OCI-LY7 (cell line): ENCODE measurements at regions of chr6 and their contacts with region 1.

Region 1: GRCh38 chr6:159645640-159646039 is 47.4 kb downstream of the SOD2 start:
- DNase-seq: no peak
- H3K4me3 ChIP-seq: no peak overlapping the region
- H3K27ac ChIP-seq: no peak overlapping the region
- H3K4me1 ChIP-seq: no peaks in the 10 kb centered on the region
- CTCF ChIP-seq: no peak

Region 2: DNA sequence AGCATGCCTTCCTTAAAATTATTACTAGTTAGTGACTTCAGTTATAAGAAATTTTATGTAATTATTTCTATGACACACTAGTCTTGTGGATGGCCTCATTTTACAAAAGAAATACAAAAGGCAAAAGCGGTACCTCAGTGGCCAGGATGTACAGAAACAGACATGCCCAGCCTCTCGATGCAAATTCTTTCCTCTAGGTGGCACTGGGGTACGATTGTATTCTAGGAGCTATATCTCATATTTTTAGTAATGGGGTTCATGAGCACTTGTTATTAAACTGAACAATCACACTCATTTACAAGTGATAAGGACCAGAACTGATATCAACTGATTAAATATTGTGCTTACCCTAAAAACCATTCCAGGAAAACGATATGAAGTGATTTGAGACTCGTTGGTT is 12.4 kb before region 1 on chr6:
- CTCF ChIA-PET with region 1: no interaction called
- POLR2A ChIA-PET with region 1: interaction called, 12 read pairs
- intact Hi-C with region 1: no loop called
- DNase-seq: peak; percentile 45
- H3K4me3 ChIP-seq: no peak overlapping the region
- H3K27ac ChIP-seq: no peak overlapping the region
- H3K4me1 ChIP-seq: no peaks in the 10 kb centered on the region
- CTCF ChIP-seq: peak; percentile 81

Region 3: DNA sequence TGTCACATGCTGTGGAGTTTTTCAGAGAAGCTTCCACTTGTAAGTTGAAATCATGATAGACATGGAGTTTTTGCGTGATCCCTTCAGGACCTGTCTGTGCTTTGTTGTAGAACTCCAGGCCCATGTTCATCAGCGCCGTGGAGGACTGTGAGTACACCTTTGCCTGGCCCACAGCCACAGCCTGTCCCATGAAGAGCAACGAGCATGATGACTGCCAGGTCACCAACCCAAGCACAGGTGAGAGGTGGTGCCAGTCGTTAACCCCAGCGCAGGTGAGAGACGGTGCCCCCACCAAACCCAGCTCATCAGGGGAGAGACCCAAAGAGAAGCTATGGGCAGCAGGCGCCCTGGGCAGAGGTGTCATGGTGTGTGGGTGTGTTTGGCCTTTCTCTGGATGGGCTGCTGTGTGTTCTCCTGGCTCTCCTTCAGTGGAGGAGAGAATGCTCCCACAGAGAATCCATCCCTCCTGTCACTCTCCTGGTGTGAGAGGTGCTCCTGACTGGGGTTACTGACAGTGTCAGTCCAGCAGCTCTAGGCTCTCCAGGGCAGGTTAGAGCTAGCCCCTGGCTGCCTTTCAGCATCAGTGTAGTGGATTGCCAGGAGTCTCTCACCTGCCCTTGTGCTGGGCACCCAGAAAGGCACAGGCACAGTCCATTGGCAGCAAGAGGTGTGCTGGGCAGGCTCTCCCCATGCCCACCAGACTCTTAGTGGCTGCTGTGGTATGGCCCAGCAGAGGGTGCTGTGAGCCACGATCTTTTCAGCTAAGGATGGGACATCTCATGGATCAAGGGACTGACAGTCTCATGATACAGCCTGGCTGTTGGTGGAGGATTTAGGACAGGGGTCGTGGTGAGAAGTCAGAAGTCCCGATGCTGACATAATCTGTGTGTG is 426.4 kb after region 1 on chr6:
- CTCF ChIA-PET with region 1: no interaction called
- POLR2A ChIA-PET with region 1: no interaction called
- intact Hi-C with region 1: no loop called
- DNase-seq: peak; percentile 9
- H3K4me3 ChIP-seq: no peak overlapping the region
- H3K27ac ChIP-seq: no peak overlapping the region
- H3K4me1 ChIP-seq: peaks cover 26% of the 10 kb centered on the region
- CTCF ChIP-seq: peak; percentile 58